H1 (cell line): ENCODE measurements at regions of chr17 and their contacts with region 1.

Region 1: GRCh38 chr17:28416703-28417311 is 10.8 kb upstream of the SLC46A1 start:
- DNase-seq: peak in 1 of 2 experiments; percentile 75
- H3K4me3 ChIP-seq: no peak overlapping the region
- H3K27ac ChIP-seq: no peak overlapping the region
- H3K4me1 ChIP-seq: peaks cover 0 to 2% (median under 1%) of the 10 kb centered on the region in 4 experiments; a peak in 4 of 7 replicates
- H3K27me3 ChIP-seq: peaks cover 2 to 26% (median 17%) of the 10 kb centered on the region in 4 experiments
- CTCF ChIP-seq: peak; percentile 64 to 96 (median 85)
- EP300 ChIP-seq: no peak
- POLR2A ChIP-seq: no peak
- RAD21 ChIP-seq: peak; percentile 67 to 82

Region 2: GRCh38 chr17:28327031-28327607 is 89.7 kb before region 1 on chr17:
- CTCF ChIA-PET with region 1: no interaction called
- POLR2A ChIA-PET with region 1: no interaction called
- DNase-seq: no peak
- H3K4me3 ChIP-seq: no peak overlapping the region
- H3K27ac ChIP-seq: no peak overlapping the region
- H3K4me1 ChIP-seq: peaks cover 0 to 3% (median 0%) of the 10 kb centered on the region in 4 experiments; a peak in 2 of 7 replicates
- H3K27me3 ChIP-seq: no peaks in the 10 kb centered on the region
- CTCF ChIP-seq: no peak
- EP300 ChIP-seq: no peak
- POLR2A ChIP-seq: no peak
- RAD21 ChIP-seq: no peak

Region 3: GRCh38 chr17:28371245-28372202 is 45.3 kb before region 1 on chr17 and contains the start of gene SARM1:
- CTCF ChIA-PET with region 1: interaction called, 142 read pairs
- POLR2A ChIA-PET with region 1: interaction called, 5 read pairs
- DNase-seq: peak; percentile 92 to 99
- H3K4me3 ChIP-seq: peak within 1 kb of the TSS; percentile 56 to 79 (median 74)
- H3K27ac ChIP-seq: no peak within 1 kb of the TSS
- H3K4me1 ChIP-seq: peaks cover 3 to 16% (median 9%) of the 10 kb centered on the region in 4 experiments; a peak in 6 of 7 replicates
- H3K27me3 ChIP-seq: peaks cover 9 to 19% (median 19%) of the 10 kb centered on the region in 4 experiments
- CTCF ChIP-seq: no peak
- EP300 ChIP-seq: no peak
- POLR2A ChIP-seq: no peak
- RAD21 ChIP-seq: no peak
- total RNA-seq, gene SARM1: 6.5 and 9.2 TPM in 2 replicates

Region 4: DNA sequence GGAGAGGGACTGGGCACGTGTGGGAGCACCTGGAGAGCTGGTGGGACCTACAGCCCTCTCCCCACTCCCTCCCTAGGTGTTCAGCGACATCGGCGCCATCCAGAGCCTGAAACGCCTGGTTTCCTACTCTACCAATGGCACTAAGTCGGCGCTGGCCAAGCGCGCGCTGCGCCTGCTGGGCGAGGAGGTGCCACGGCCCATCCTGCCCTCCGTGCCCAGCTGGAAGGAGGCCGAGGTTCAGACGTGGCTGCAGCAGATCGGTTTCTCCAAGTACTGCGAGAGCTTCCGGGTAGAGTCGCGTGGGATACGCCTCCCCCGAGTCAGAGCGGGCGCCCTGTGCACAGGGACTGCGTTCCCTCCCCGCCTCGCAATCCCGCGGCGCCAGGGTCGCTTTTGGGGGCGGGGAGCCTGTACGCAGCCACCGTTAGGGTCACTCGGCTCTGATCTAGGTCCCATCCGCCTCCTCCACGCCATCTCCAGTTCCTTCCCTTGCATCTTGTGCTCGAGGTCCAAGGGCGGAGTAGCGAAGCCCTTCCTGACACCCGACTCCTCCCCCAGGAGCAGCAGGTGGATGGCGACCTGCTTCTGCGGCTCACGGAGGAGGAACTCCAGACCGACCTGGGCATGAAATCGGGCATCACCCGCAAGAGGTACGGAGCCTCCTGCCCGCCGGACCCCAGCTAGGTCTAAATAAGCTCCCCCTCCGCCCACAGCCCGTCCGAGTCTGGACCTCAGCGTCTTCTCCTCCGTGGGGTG is 32.3 kb before region 1 on chr17:
- CTCF ChIA-PET with region 1: interaction called, 142 read pairs
- POLR2A ChIA-PET with region 1: no interaction called
- DNase-seq: peak in 1 of 2 experiments; percentile 77
- H3K4me3 ChIP-seq: peak overlapping the region; percentile 32 to 77 (median 62)
- H3K27ac ChIP-seq: no peak overlapping the region
- H3K4me1 ChIP-seq: peaks cover 0 to 13% (median 6%) of the 10 kb centered on the region in 4 experiments; a peak in 4 of 7 replicates
- H3K27me3 ChIP-seq: peaks cover 38 to 67% (median 57%) of the 10 kb centered on the region in 4 experiments
- CTCF ChIP-seq: no peak
- EP300 ChIP-seq: no peak
- POLR2A ChIP-seq: 0 out of 3 replicates have a peak, but pooled peaks of 1 of the 2 experiments have one; percentile 37
- RAD21 ChIP-seq: no peak

Region 5: DNA sequence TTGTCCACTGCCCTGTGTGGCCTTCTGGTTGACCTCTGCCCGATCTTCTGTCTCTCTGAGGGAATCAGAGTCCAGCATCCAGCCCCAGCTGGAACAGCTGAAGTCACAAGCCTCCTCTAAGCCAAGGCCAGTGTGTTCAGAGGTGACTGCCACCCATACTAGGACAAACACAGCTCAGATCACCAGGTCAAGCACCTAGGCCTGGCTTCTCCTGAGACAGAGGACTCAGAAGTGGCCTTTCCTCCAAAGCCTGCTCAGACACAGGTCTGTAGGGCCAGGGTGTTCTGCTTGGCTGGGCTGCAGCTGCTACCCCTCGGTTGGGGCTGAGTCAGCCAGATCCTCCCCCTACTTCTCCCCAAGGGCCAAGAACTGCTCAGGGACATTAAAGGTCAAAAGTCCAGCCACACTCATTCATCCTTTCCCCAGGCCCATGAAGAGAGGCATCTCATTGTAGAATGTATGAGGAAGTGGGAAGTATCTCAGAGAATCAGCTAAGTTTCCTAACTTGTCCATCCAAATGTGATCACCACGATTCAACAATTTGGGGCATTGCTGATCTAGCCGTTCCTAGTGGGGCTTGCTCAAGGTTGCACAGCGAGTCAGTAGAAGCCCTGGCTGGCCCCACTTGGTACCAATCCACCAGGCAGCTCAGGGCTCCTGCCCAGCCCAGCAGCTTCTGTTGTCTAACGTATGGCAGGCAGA is 18.4 kb before region 1 on chr17:
- CTCF ChIA-PET with region 1: interaction called, 52 read pairs
- POLR2A ChIA-PET with region 1: interaction called, 3 read pairs
- DNase-seq: no peak
- H3K4me3 ChIP-seq: no peak overlapping the region
- H3K27ac ChIP-seq: no peak overlapping the region
- H3K4me1 ChIP-seq: peaks cover 3 to 22% (median 14%) of the 10 kb centered on the region in 4 experiments
- H3K27me3 ChIP-seq: peaks cover 0 to 16% (median 3%) of the 10 kb centered on the region in 4 experiments; a peak in 4 of 7 replicates
- CTCF ChIP-seq: no peak
- EP300 ChIP-seq: no peak
- POLR2A ChIP-seq: no peak
- RAD21 ChIP-seq: no peak

Region 6: GRCh38 chr17:28405632-28406472 is 11.0 kb before region 1 on chr17 and contains the start of gene SLC46A1:
- CTCF ChIA-PET with region 1: interaction called, 52 read pairs
- POLR2A ChIA-PET with region 1: interaction called, 3 read pairs
- DNase-seq: peak in 1 of 2 experiments; percentile 87
- H3K4me3 ChIP-seq: peak within 1 kb of the TSS; percentile 51 to 74 (median 60)
- H3K27ac ChIP-seq: no peak within 1 kb of the TSS; the same call in 1 of the 2 replicates
- H3K4me1 ChIP-seq: peaks cover 32 to 64% (median 40%) of the 10 kb centered on the region in 4 experiments
- H3K27me3 ChIP-seq: peaks cover 0 to 35% (median 15%) of the 10 kb centered on the region in 4 experiments; a peak in 5 of 7 replicates
- CTCF ChIP-seq: no peak
- EP300 ChIP-seq: no peak
- POLR2A ChIP-seq: no peak
- RAD21 ChIP-seq: no peak
- total RNA-seq, gene SLC46A1: 7.1 and 8.7 TPM in 2 replicates

Region 7: GRCh38 chr17:28468781-28469180 is 52.0 kb after region 1 on chr17:
- CTCF ChIA-PET with region 1: no interaction called
- POLR2A ChIA-PET with region 1: no interaction called
- DNase-seq: no peak
- H3K4me3 ChIP-seq: no peak overlapping the region
- H3K27ac ChIP-seq: no peak overlapping the region
- H3K4me1 ChIP-seq: peaks cover 0 to 3% (median under 1%) of the 10 kb centered on the region in 4 experiments; a peak in 1 of 7 replicates
- H3K27me3 ChIP-seq: no peaks in the 10 kb centered on the region; a peak in 2 of 7 replicates
- CTCF ChIP-seq: no peak
- EP300 ChIP-seq: no peak
- POLR2A ChIP-seq: no peak
- RAD21 ChIP-seq: no peak